GM10248 (cell line): ENCODE measurements at regions of chr10 and their contacts with region 1.

Region 1: DNA sequence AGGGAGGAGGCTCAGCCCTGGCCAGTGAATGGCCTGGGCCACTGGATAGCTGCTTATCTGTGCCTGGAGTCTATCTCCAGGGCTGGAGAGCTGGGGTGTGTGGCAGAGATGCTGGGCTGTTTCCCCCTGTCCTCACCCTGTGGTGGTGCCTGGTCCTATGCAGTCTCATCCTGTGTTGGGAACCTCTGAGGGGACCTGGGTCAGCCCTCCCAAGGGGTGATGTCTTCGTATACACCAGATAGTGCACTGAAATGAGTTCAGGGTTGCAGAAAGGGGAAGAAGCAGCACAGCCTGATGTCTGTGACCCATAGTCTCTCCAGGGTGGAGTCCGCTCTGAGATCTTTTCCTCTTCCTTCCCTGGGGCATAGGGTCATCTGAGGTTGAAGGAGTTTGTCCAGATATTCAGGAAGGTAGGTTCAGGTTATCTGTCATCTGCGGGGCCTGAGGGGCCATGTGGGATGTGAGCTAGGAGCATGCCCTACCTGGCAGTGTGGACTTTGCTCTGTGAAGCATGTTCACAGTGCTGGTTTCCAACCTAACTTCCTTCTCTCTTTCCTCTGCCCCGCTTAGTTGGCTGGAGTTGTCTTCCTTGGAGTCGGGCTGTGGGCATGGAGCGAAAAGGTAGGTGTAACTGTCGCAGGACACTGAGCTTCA is 33.4 kb upstream of the SH2D4B start:
- DNase-seq: no peak
- CTCF ChIP-seq: no peak

Region 2: DNA sequence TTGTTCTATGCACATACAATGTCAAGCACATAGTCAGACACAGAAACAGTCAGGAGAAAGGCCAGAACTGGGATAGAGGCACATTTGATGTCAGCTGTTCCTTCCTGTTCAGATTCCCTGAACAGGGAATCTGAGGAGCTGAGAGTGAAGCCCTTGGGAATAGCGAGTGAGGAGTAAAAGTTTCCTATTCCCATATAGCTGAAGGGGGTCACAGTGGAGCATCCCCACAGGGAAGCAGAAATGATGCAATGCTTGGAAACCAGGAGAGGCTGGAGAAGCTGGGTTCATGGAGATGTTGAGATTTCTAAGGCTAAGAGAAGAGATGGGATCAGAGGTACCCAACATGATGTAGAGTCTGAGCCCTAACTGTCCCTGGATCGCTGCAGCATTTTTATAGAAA is 107.3 kb before region 1 on chr10:
- CTCF ChIA-PET with region 1: interaction called, 11 read pairs
- POLR2A ChIA-PET with region 1: no interaction called
- DNase-seq: no peak
- CTCF ChIP-seq: no peak

Region 3: GRCh38 chr10:80421707-80422536 is 82.4 kb before region 1 on chr10:
- CTCF ChIA-PET with region 1: interaction called, 37 read pairs
- POLR2A ChIA-PET with region 1: no interaction called
- DNase-seq: peak; percentile 55
- CTCF ChIP-seq: no peak

Region 4: GRCh38 chr10:80493522-80494051 is 10.7 kb before region 1 on chr10:
- CTCF ChIA-PET with region 1: interaction called, 42 read pairs
- POLR2A ChIA-PET with region 1: no interaction called
- DNase-seq: no peak
- CTCF ChIP-seq: no peak

Region 5: GRCh38 chr10:80599424-80599847 is 95.2 kb after region 1 on chr10:
- CTCF ChIA-PET with region 1: interaction called, 12 read pairs
- POLR2A ChIA-PET with region 1: no interaction called
- DNase-seq: peak; percentile 76
- CTCF ChIP-seq: peak; percentile 85